SK-N-SH (cell line): ENCODE measurements at regions of chr12 and their contacts with region 1.

Region 1: GRCh38 chr12:49967042-49967776 is 5.5 kb downstream of the AQP5 start:
- DNase-seq: peak; percentile 94
- H3K4me3 ChIP-seq: peak overlapping the region; percentile 47 to 64
- H3K27ac ChIP-seq: peak overlapping the region in 1 of 2 experiments; percentile 60; a peak in 1 of 4 replicates
- H3K4me1 ChIP-seq: peaks cover 10 to 25% of the 10 kb centered on the region in 2 experiments; a peak in 2 of 4 replicates
- H3K27me3 ChIP-seq: no peaks in the 10 kb centered on the region
- CTCF ChIP-seq: peak; percentile 74
- EP300 ChIP-seq: 0 out of 4 replicates have a peak, but pooled peaks of 1 of the 2 experiments have one; percentile 2
- RAD21 ChIP-seq: peak; percentile 94

Region 2: DNA sequence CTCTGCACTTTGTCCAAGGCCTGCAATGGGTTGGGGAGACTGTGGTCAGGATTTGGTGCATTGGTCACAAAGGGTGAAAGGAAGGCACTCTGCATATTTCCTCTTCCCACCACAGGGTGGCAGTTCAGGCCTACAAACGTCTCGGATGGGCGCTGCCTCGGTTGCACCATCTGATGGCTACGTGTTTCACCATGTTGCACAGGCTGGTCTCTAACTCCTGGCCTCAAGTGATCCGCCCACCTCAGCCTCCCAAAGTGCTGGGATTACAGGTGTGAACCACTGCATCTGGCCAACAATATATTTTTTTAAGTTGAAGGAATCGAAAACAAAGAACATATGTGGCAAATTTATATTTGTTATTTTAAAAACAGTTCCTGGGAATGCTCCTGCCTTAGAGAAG is 190.8 kb before region 1 on chr12:
- CTCF ChIA-PET with region 1: interaction called, 17 read pairs
- POLR2A ChIA-PET with region 1: no interaction called
- DNase-seq: peak; percentile 79
- H3K4me3 ChIP-seq: peak overlapping the region in 1 of 2 experiments; percentile 9; a peak in 1 of 4 replicates
- H3K27ac ChIP-seq: no peak overlapping the region
- H3K4me1 ChIP-seq: no peaks in the 10 kb centered on the region
- H3K27me3 ChIP-seq: no peaks in the 10 kb centered on the region
- CTCF ChIP-seq: peak; percentile 84
- EP300 ChIP-seq: no peak
- RAD21 ChIP-seq: peak; percentile 91

Region 3: DNA sequence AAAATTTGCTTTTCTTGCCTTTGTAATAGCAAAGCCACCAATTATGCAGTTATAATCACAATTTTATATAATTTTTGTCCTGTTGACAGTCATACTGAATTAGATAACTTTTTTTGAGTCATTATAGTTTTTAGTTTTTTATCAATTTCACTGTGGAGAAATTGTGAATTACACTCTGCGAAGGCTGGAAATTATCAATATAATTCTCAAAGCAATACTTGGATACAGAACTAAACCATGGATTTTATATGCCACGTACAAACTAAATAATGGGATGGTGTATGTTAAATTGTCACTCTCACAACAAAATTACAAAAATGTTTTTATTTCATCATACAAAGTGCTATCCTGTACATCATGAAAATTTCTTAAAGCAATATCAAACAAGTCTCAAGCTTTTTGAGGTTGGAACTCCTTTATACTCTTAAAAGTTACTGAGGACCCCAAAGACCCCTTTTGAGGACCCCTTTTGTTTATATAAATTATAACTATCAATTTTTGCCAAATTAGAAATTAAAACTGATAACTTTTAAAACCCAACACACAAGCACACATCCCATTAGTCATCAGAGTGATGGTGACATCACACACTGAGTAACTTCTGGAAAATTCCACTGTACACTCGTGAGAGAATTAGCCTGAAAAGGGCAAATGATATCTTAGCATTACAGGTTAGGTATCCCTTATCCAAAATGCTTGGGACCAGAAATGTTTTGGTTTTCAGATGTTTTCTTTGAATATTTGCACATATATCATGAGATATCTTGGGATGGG is 36.5 kb before region 1 on chr12:
- CTCF ChIA-PET with region 1: interaction called, 18 read pairs
- POLR2A ChIA-PET with region 1: no interaction called
- DNase-seq: no peak
- H3K4me3 ChIP-seq: no peak overlapping the region
- H3K27ac ChIP-seq: 0 out of 4 replicates have a peak overlapping the region, but pooled peaks of 1 of the 2 experiments have one; percentile 6
- H3K4me1 ChIP-seq: peaks cover 0 to 5% of the 10 kb centered on the region in 2 experiments; a peak in 1 of 4 replicates
- H3K27me3 ChIP-seq: no peaks in the 10 kb centered on the region
- CTCF ChIP-seq: peak; percentile 34; the same call in 1 of the 2 replicates
- EP300 ChIP-seq: no peak
- RAD21 ChIP-seq: no peak

Region 4: DNA sequence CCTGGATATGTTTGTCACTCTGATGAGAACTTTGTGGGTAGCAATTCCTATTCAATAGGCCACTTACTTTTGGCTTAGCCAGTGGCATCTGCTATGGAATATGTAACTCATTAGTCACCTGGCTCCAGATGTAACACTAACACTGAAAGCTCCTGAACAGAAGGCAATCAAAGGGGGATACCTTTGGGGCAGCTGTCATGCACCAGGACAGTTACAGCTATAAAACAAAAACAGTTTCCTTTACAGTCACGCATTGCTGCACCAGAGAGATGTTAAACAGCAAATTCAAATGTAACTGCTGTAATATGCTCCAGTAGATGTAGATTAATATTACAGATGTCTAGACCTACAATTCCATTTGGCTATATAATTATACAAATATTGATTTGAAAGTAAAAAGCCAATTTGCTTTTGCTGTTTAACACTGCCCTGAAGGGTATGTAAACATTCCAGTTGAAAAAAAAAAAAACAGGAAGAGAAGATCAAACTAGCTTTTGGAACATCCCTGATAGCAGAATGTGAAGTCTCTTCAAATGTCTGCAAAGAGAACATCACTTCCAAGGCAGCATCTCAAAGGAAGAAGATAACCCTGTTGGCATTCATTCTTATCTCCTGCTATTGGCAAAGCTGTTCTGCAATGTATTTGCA is 39.7 kb after region 1 on chr12:
- CTCF ChIA-PET with region 1: interaction called, 44 read pairs
- POLR2A ChIA-PET with region 1: no interaction called
- DNase-seq: no peak
- H3K4me3 ChIP-seq: no peak overlapping the region
- H3K27ac ChIP-seq: peak overlapping the region; percentile 3 to 87; a peak in 3 of 4 replicates
- H3K4me1 ChIP-seq: peaks cover 6 to 41% of the 10 kb centered on the region in 2 experiments; a peak in 2 of 4 replicates
- H3K27me3 ChIP-seq: no peaks in the 10 kb centered on the region
- CTCF ChIP-seq: no peak
- EP300 ChIP-seq: peak in 1 of 2 experiments; percentile 80; a peak in 2 of 4 replicates
- RAD21 ChIP-seq: no peak

Region 5: DNA sequence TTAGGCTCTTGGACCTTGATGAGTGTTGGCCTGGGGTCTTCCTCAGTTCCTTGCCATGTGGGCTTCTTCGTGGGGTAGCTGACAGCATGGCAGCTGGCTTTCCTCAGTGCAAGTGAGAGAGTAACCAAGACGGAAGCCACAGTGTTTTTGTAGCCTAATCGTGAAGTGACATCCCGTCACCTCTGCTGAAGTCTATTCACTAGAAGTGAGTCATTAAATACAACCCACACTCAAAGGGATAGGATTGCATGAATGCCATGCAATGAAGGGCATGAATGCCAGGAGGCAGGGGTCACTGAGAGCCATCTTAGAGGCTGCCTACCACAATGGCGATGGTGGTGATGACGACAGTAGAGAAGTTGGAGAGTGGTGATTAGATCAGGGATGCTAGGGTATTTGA is 76.6 kb after region 1 on chr12:
- CTCF ChIA-PET with region 1: interaction called, 1,401 read pairs
- POLR2A ChIA-PET with region 1: no interaction called
- DNase-seq: no peak
- H3K4me3 ChIP-seq: no peak overlapping the region
- H3K27ac ChIP-seq: no peak overlapping the region
- H3K4me1 ChIP-seq: peaks cover 0 to 3% of the 10 kb centered on the region in 2 experiments; a peak in 1 of 4 replicates
- H3K27me3 ChIP-seq: no peaks in the 10 kb centered on the region
- CTCF ChIP-seq: no peak
- EP300 ChIP-seq: no peak
- RAD21 ChIP-seq: no peak

Region 6: GRCh38 chr12:50103767-50104321 is 136.6 kb after region 1 on chr12 and contains the start of gene GPD1:
- CTCF ChIA-PET with region 1: interaction called, 19 read pairs
- POLR2A ChIA-PET with region 1: no interaction called
- DNase-seq: peak; percentile 74
- H3K4me3 ChIP-seq: no peak within 1 kb of the TSS
- H3K27ac ChIP-seq: peak within 1 kb of the TSS in 1 of 2 experiments; percentile 36; a peak in 1 of 4 replicates
- H3K4me1 ChIP-seq: peaks cover 0 to 23% of the 10 kb centered on the region in 2 experiments; a peak in 1 of 4 replicates
- H3K27me3 ChIP-seq: no peaks in the 10 kb centered on the region
- CTCF ChIP-seq: no peak
- EP300 ChIP-seq: no peak
- RAD21 ChIP-seq: no peak
- polyA plus RNA-seq, gene GPD1: 0.07 and 0.26 TPM in 2 replicates

Region 7: GRCh38 chr12:50174971-50175715 is 207.9 kb after region 1 on chr12:
- CTCF ChIA-PET with region 1: interaction called, 22 read pairs
- POLR2A ChIA-PET with region 1: no interaction called
- DNase-seq: peak; percentile 64
- H3K4me3 ChIP-seq: no peak overlapping the region
- H3K27ac ChIP-seq: peak overlapping the region in 1 of 2 experiments; percentile 41; a peak in 1 of 4 replicates
- H3K4me1 ChIP-seq: no peaks in the 10 kb centered on the region
- H3K27me3 ChIP-seq: no peaks in the 10 kb centered on the region
- CTCF ChIP-seq: peak; percentile 74
- EP300 ChIP-seq: no peak
- RAD21 ChIP-seq: peak; percentile 86